Posterior vena cava (tissue), 2 donors: ENCODE measurements at regions of chr18 and their contacts with region 1.

Region 1: GRCh38 chr18:79380816-79381806 is 14.6 kb upstream of the NFATC1 start:
- DNase-seq: peak; percentile 88

Region 2: DNA sequence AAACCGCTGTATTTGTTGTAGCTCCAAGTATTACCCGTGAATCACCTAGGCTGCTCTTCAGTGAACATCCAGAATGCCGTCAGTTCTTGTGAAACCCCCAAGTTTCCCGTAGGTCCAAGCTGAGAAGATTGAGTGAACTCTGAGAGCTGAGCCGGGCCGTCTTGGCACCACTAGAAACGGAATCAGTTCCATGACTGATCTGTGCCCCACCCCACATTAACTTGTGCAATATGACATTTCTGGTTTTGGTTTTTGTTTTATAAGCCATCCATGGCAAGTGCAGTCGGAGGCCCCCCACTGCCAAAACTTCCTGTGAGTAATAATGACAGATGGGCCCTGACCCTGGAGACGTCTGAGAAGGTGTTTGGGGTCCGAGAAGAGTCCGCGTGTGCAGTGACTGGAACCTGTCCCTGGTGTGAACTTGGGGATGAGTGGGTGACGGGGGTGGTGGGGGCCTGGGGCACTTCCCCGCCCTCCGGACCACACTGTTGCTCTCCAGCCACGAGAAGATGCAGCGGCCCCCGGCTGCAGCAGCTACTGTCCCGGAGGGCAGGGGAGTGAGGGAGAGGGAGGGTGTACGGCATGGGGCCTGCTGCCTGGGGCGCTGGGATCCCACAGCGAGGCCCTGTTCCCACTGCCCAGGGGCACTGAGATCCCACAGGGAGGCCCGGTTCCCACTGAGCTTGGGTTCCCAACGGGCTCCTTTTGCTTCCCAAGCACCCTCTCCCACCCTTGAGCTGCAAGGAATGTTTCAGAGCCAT is 41.1 kb after region 1 on chr18:
- intact Hi-C with region 1: no loop called
- DNase-seq: no peak

Region 3: GRCh38 chr18:79507076-79507545 is 126.0 kb after region 1 on chr18:
- intact Hi-C with region 1: loop called in 1 of 2 experiments (anchors 10 kb)
- DNase-seq: peak; percentile 91

Region 4: GRCh38 chr18:79644006-79644665 is 263.0 kb after region 1 on chr18:
- intact Hi-C with region 1: loop called (anchors 2 kb)
- DNase-seq: no peak